K562 (cell line): ENCODE measurements at regions of chr6 and their contacts with region 1.

Region 1: GRCh38 chr6:138115877-138116660 is 8.8 kb upstream of the PERP start:
- DNase-seq: peak; percentile 69 to 75 (median 73)
- ATAC-seq: peak; percentile 97
- H3K4me3 ChIP-seq: no peak overlapping the region
- H3K27ac ChIP-seq: no peak overlapping the region
- H3K4me1 ChIP-seq: no peaks in the 10 kb centered on the region
- H3K27me3 ChIP-seq: peaks cover 2 to 3% of the 10 kb centered on the region in 2 experiments; a peak in 1 of 5 replicates
- CTCF ChIP-seq: peak; percentile 72 to 93 (median 80)
- EP300 ChIP-seq: no peak
- POLR2A ChIP-seq: no peak
- RAD21 ChIP-seq: peak; percentile 94 to 96

Region 2: GRCh38 chr6:137944793-137945498 is 171.1 kb before region 1 on chr6:
- CTCF ChIA-PET with region 1: no interaction called
- POLR2A ChIA-PET with region 1: no interaction called
- in situ Hi-C with region 1: no loop called
- intact Hi-C with region 1: no loop called
- DNase-seq: peak; percentile 52 to 67 (median 56)
- ATAC-seq: peak; percentile 92
- H3K4me3 ChIP-seq: no peak overlapping the region
- H3K27ac ChIP-seq: no peak overlapping the region
- H3K4me1 ChIP-seq: peaks cover 0 to 7% of the 10 kb centered on the region in 2 experiments; a peak in 2 of 5 replicates
- H3K27me3 ChIP-seq: no peaks in the 10 kb centered on the region
- CTCF ChIP-seq: peak; percentile 82 to 92 (median 84)
- EP300 ChIP-seq: no peak
- POLR2A ChIP-seq: no peak
- RAD21 ChIP-seq: peak; percentile 93 to 96

Region 3: GRCh38 chr6:138001750-138002349 is 114.2 kb before region 1 on chr6:
- CTCF ChIA-PET with region 1: interaction called, 3 read pairs
- POLR2A ChIA-PET with region 1: no interaction called
- in situ Hi-C with region 1: loop called (anchors 5 kb)
- intact Hi-C with region 1: no loop called
- DNase-seq: peak; percentile 48 to 74 (median 58)
- ATAC-seq: peak; percentile 60
- H3K4me3 ChIP-seq: no peak overlapping the region
- H3K27ac ChIP-seq: no peak overlapping the region
- H3K4me1 ChIP-seq: no peaks in the 10 kb centered on the region
- H3K27me3 ChIP-seq: peaks cover 4 to 7% of the 10 kb centered on the region in 2 experiments; a peak in 2 of 5 replicates
- CTCF ChIP-seq: peak; percentile 82 to 94 (median 86)
- EP300 ChIP-seq: no peak
- POLR2A ChIP-seq: no peak
- RAD21 ChIP-seq: peak; percentile 77 to 84

Region 4: GRCh38 chr6:138129190-138129589 is 13.1 kb after region 1 on chr6:
- CTCF ChIA-PET with region 1: no interaction called
- POLR2A ChIA-PET with region 1: no interaction called
- in situ Hi-C with region 1: no loop called
- intact Hi-C with region 1: no loop called
- DNase-seq: peak in 1 of 4 experiments; percentile 18
- ATAC-seq: peak; percentile 86
- H3K4me3 ChIP-seq: no peak overlapping the region
- H3K27ac ChIP-seq: no peak overlapping the region
- H3K4me1 ChIP-seq: no peaks in the 10 kb centered on the region
- H3K27me3 ChIP-seq: no peaks in the 10 kb centered on the region
- CTCF ChIP-seq: peak; percentile 34 to 45 (median 40); a peak in 4 of 6 replicates
- EP300 ChIP-seq: no peak
- POLR2A ChIP-seq: no peak
- RAD21 ChIP-seq: peak in 1 of 2 experiments; percentile 31; a peak in 2 of 4 replicates

Region 5: GRCh38 chr6:138403801-138404661 is 288.0 kb after region 1 on chr6 and contains the start of gene HEBP2:
- CTCF ChIA-PET with region 1: no interaction called
- POLR2A ChIA-PET with region 1: no interaction called
- in situ Hi-C with region 1: no loop called
- intact Hi-C with region 1: loop called (anchors 5 kb)
- DNase-seq: peak; percentile 96 to 98 (median 98)
- ATAC-seq: peak; percentile 95
- H3K4me3 ChIP-seq: peak within 1 kb of the TSS; percentile 58
- H3K27ac ChIP-seq: peak within 1 kb of the TSS; percentile 87
- H3K4me1 ChIP-seq: peaks cover 10 to 23% of the 10 kb centered on the region in 2 experiments
- H3K27me3 ChIP-seq: no peaks in the 10 kb centered on the region
- CTCF ChIP-seq: peak; percentile 51 to 59 (median 53)
- EP300 ChIP-seq: peak; percentile 45; the same call in 1 of the 2 replicates
- POLR2A ChIP-seq: peak; percentile 88
- RAD21 ChIP-seq: peak; percentile 65 to 85
- polyA plus RNA-seq, gene HEBP2: 8.5 to 14.5 TPM

Region 6: DNA sequence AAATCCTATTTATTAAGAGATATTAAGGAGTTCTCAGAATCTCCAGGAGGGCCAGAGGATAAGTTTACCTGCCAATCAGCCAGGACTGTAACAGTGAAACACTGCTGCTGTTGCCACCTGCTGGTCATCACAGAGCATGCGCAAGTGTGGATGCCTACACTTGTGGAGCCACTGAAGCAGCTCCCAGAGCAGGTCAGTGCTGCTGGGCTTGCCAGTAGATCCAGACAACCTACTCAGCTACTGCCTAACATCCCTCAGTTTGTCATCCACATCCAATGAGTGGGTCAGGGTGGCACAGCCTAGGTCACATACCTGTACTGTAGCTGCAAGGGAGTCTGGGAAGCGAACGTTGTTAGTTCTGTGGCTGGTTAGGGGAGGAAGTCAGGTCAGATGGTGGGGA is 401.6 kb after region 1 on chr6:
- CTCF ChIA-PET with region 1: interaction called, 7 read pairs
- POLR2A ChIA-PET with region 1: no interaction called
- in situ Hi-C with region 1: loop called (anchors 5 kb)
- intact Hi-C with region 1: no loop called
- DNase-seq: peak; percentile 25 to 35 (median 31)
- ATAC-seq: peak; percentile 79
- H3K4me3 ChIP-seq: no peak overlapping the region
- H3K27ac ChIP-seq: no peak overlapping the region
- H3K4me1 ChIP-seq: no peaks in the 10 kb centered on the region
- H3K27me3 ChIP-seq: peaks cover 0 to 11% of the 10 kb centered on the region in 2 experiments; a peak in 2 of 5 replicates
- CTCF ChIP-seq: peak; percentile 38 to 61 (median 48); a peak in 5 of 6 replicates
- EP300 ChIP-seq: no peak
- POLR2A ChIP-seq: no peak
- RAD21 ChIP-seq: peak in 1 of 2 experiments; percentile 23; a peak in 1 of 4 replicates

Region 7: DNA sequence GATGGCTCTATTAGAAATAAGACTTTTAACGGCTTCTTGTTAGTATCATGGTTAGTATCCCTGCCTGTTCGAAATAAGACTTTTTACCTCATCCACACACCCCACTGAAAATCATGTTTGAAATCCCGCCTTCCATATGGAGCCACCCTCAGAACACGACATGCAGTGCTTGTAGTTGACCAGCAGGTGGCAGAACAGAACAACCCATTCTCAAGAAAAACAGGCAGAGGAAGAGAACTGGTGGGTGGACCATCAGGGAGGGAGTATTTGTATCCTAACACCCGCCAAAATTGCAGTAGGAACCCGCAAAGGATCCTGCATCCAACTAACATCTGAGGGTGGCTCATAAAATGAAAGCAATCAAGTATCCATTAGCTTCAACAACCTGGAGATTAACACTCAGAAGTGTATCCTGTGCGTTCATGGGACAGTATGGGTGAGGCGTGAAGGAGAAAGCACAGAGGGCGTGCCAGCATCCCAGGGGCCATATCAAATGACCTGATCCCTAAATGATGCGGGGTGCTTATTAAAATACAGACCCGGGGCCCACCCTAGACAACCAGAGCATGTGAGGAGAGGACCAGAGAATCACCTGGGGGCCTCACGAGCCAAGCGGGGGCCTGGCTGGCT is 472.9 kb after region 1 on chr6:
- CTCF ChIA-PET with region 1: interaction called, 9 read pairs
- POLR2A ChIA-PET with region 1: no interaction called
- in situ Hi-C with region 1: no loop called
- intact Hi-C with region 1: loop called (anchors 1 kb)
- DNase-seq: peak; percentile 80 to 82 (median 82)
- ATAC-seq: peak; percentile 89
- H3K4me3 ChIP-seq: no peak overlapping the region
- H3K27ac ChIP-seq: no peak overlapping the region
- H3K4me1 ChIP-seq: no peaks in the 10 kb centered on the region
- H3K27me3 ChIP-seq: peaks cover 14 to 34% of the 10 kb centered on the region in 2 experiments; a peak in 4 of 5 replicates
- CTCF ChIP-seq: peak; percentile 88 to 95 (median 93)
- EP300 ChIP-seq: no peak
- POLR2A ChIP-seq: no peak
- RAD21 ChIP-seq: peak; percentile 82 to 88

Region 8: DNA sequence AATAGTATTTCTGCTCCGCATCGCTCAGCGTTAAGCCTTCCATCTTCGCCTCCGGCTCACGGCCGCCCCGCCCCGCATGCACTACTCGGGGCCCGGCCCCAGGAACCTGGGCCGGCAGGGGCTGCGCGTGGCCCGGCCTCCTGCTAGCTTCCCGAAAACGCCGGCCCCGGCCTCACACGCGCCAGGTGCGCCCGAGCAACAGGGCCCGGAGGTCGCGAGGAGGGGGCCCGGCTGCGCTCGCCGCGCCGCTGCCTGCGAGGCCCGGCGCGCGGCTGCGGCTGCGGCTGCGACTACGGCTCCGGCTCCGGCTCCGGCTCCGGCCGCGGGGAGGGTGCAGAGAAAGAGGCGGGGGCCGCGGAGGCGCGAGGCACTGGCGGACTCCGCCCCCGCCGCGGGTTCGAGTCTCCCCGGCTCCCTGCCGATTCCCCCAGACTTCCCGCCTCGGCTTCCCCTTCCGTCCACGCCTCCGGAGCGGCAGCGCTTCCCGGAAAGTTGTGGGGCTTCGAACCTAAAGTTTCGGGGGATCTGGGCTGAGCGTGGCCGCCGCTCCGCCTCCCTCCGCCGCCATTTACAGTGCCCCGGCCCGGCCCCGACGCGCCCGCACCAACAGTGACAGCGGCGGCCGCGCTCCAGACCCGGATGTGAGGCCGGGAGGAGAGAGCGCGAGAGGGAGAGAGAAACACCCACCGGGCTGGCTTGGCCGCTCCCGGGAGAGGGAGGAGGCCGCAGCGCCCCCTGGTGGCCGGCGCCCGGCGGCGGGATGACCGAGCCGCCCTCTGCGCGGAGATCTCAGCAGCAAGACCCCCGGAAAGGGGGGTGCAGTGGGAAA is 871.8 kb after region 1 on chr6 and contains the start of gene REPS1:
- CTCF ChIA-PET with region 1: no interaction called
- POLR2A ChIA-PET with region 1: no interaction called
- in situ Hi-C with region 1: no loop called
- intact Hi-C with region 1: loop called (anchors 5 kb)
- DNase-seq: peak; percentile 94 to 97 (median 96)
- ATAC-seq: peak; percentile 98
- H3K4me3 ChIP-seq: peak within 1 kb of the TSS; percentile 86
- H3K27ac ChIP-seq: peak within 1 kb of the TSS; percentile 86
- H3K4me1 ChIP-seq: peaks cover 17 to 22% of the 10 kb centered on the region in 2 experiments
- H3K27me3 ChIP-seq: peaks cover 3 to 27% of the 10 kb centered on the region in 2 experiments; a peak in 3 of 5 replicates
- CTCF ChIP-seq: peak; percentile 89 to 95 (median 91)
- EP300 ChIP-seq: no peak; the same call in 1 of the 2 replicates
- POLR2A ChIP-seq: peak; percentile 92
- RAD21 ChIP-seq: peak; percentile 85 to 88
- polyA plus RNA-seq, gene REPS1: 7.9 to 11.4 TPM